ENCODE measurements at regions of chr20 and their contacts with region 1.

Region 1: GRCh38 chr20:13546497-13547131 is 92.1 kb downstream of the TASP1 start:
- DNase-seq: peak; percentile 83
- ATAC-seq: peak; percentile 94
- H3K4me3 ChIP-seq: no peak overlapping the region
- H3K27ac ChIP-seq: no peak overlapping the region
- H3K4me1 ChIP-seq: no peaks in the 10 kb centered on the region
- H3K27me3 ChIP-seq: no peaks in the 10 kb centered on the region
- CTCF ChIP-seq: peak; percentile 94
- EP300 ChIP-seq: no peak
- POLR2A ChIP-seq: no peak
- RAD21 ChIP-seq: peak; percentile 97

Region 2: GRCh38 chr20:13221673-13222318 is 324.8 kb before region 1 on chr20:
- CTCF ChIA-PET with region 1: no interaction called
- POLR2A ChIA-PET with region 1: no interaction called
- in situ Hi-C with region 1: no loop called
- intact Hi-C with region 1: loop called (anchors 5 kb)
- DNase-seq: peak; percentile 65
- ATAC-seq: peak; percentile 89
- H3K4me3 ChIP-seq: peak overlapping the region; percentile 65 to 81 (median 77)
- H3K27ac ChIP-seq: no peak overlapping the region
- H3K4me1 ChIP-seq: peaks cover 22% of the 10 kb centered on the region
- H3K27me3 ChIP-seq: peaks cover 0 to 35% of the 10 kb centered on the region in 2 experiments; a peak in 3 of 5 replicates
- CTCF ChIP-seq: peak; percentile 27; the same call in 1 of the 2 replicates
- EP300 ChIP-seq: no peak
- POLR2A ChIP-seq: 0 out of 4 replicates have a peak, but pooled peaks of 1 of the 2 experiments have one; percentile 19
- RAD21 ChIP-seq: peak; percentile 73

Region 3: DNA sequence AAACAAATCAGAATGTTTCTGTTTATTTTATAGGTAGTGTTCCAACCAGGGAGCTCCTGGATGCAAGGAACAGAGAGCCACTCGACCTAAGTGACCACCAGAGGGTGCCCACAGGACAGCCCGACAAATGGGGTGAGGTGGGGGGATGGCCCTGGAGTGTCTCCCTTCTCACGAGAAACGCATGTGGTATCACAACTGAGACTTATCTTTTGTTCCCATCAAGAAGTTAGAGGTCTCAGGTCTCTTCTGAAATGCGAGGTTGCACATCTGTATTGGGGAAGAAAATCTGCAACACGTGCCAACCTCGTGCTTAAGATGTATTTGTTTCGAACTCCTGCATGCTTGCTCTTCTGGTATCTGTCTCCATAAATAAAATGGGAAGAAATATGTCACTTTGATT is 221.6 kb before region 1 on chr20:
- CTCF ChIA-PET with region 1: interaction called, 56 read pairs
- POLR2A ChIA-PET with region 1: interaction called, 6 read pairs
- in situ Hi-C with region 1: loop called (anchors 5 kb)
- intact Hi-C with region 1: loop called (anchors 1 kb)
- DNase-seq: peak; percentile 74
- ATAC-seq: peak; percentile 99
- H3K4me3 ChIP-seq: no peak overlapping the region
- H3K27ac ChIP-seq: no peak overlapping the region
- H3K4me1 ChIP-seq: peaks cover 29% of the 10 kb centered on the region
- H3K27me3 ChIP-seq: no peaks in the 10 kb centered on the region
- CTCF ChIP-seq: peak; percentile 98
- EP300 ChIP-seq: no peak
- POLR2A ChIP-seq: no peak
- RAD21 ChIP-seq: peak; percentile 99

Region 4: DNA sequence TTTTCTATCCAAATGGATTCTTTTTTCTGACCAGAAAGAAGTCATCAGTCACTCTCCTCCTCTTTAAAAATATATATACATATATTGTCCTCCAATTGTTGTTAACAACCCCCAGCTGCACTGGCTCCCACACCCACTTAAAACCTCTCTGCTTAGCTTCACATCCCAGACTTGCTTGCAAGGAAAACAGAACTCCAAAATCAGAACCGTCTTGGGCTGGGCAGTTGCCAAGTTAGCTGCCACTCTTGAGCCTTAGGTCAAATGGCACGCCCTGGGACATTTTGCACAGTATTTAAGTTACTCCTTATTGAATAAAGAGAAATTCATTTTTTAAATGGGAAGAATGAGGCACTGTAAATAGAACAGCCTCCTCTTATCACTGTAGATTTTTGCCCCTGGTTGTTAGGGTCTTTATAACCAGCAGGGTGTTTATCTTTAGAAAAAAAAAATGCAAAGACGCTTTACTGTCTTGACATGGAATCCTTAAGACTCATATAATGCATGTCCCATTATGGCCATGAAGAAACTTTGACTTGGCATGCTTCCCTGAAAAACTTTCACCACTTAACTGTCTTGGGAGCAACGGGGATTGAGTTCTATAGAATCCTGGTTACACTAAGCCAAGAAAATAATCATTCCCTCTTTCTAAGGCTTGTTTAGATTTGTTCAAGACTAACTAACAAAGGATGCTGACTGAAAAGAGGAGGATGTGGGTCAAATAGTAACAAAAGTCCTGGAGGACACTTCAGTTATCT is 121.1 kb before region 1 on chr20:
- CTCF ChIA-PET with region 1: no interaction called
- POLR2A ChIA-PET with region 1: no interaction called
- in situ Hi-C with region 1: no loop called
- intact Hi-C with region 1: loop called (anchors 5 kb)
- DNase-seq: no peak
- ATAC-seq: no peak
- H3K4me3 ChIP-seq: no peak overlapping the region
- H3K27ac ChIP-seq: peak overlapping the region; percentile 82
- H3K4me1 ChIP-seq: peaks cover 66% of the 10 kb centered on the region
- H3K27me3 ChIP-seq: no peaks in the 10 kb centered on the region
- CTCF ChIP-seq: no peak
- EP300 ChIP-seq: no peak
- POLR2A ChIP-seq: no peak
- RAD21 ChIP-seq: no peak

Region 5: GRCh38 chr20:13501500-13501899 is 45.1 kb before region 1 on chr20:
- CTCF ChIA-PET with region 1: no interaction called
- POLR2A ChIA-PET with region 1: no interaction called
- in situ Hi-C with region 1: no loop called
- intact Hi-C with region 1: no loop called
- DNase-seq: no peak
- ATAC-seq: no peak
- H3K4me3 ChIP-seq: no peak overlapping the region
- H3K27ac ChIP-seq: no peak overlapping the region
- H3K4me1 ChIP-seq: no peaks in the 10 kb centered on the region
- H3K27me3 ChIP-seq: no peaks in the 10 kb centered on the region
- CTCF ChIP-seq: no peak
- EP300 ChIP-seq: no peak
- POLR2A ChIP-seq: no peak
- RAD21 ChIP-seq: no peak

Measured in HepG2 (cell line).